BJ (cell line): ENCODE measurements at regions of chr5 and their contacts with region 1.

Region 1: DNA sequence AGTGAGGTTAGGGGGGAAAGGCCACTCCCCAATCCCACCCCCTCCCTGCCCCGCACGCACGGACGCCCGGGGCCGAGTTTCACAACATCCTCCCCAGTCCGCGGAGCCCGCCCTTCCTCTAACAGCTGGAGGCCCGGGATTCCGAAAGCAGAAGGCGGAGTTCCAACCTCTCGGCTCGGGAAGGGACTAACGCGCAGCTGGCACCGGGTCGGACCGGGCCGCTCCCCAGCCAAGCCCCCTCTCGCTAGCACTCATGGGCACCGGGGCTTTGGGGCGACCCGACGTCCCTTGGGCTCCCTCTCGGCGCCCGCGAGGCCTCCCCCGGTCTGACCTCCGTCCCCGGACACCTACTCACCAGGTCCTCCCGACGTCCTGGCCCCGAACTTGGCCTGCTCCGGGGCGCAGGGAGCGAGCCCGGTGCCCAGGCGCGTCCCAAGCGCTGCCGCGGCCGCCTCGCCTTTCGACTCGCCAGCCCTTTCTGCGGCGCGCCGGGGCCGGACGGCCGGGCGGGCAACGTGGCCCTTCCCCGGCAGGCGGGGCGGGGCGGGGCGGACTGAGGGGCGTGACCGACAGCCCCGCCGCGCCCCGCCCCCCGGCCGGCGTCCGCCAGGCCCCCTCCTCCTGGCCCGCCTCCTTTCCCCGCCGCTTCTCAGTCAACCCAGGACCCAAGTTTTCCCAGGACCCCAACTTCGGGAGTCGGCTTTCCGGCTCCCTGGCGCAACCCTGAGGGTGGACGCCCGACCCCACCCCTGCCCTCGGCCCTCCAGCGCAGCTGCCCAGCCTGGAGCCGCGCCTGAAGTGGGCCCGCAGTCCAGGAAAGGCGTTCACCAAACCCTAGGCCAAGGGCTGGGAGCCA is at the start of gene MGAT1:
- DNase-seq: no peak
- H3K4me3 ChIP-seq: peak within 1 kb of the TSS; percentile 95
- H3K27me3 ChIP-seq: no peaks in the 10 kb centered on the region
- CTCF ChIP-seq: no peak
- polyA plus RNA-seq, gene MGAT1: 156 and 197 TPM in 2 replicates

Region 2: GRCh38 chr5:180790011-180790410 is 12.5 kb before region 1 on chr5:
- CTCF ChIA-PET with region 1: interaction called, 38 read pairs
- POLR2A ChIA-PET with region 1: interaction called, 15 read pairs
- DNase-seq: no peak
- H3K4me3 ChIP-seq: no peak overlapping the region
- H3K27me3 ChIP-seq: no peaks in the 10 kb centered on the region
- CTCF ChIP-seq: no peak